A673 (cell line): ENCODE measurements at regions of chr13 and their contacts with region 1.

Region 1: DNA sequence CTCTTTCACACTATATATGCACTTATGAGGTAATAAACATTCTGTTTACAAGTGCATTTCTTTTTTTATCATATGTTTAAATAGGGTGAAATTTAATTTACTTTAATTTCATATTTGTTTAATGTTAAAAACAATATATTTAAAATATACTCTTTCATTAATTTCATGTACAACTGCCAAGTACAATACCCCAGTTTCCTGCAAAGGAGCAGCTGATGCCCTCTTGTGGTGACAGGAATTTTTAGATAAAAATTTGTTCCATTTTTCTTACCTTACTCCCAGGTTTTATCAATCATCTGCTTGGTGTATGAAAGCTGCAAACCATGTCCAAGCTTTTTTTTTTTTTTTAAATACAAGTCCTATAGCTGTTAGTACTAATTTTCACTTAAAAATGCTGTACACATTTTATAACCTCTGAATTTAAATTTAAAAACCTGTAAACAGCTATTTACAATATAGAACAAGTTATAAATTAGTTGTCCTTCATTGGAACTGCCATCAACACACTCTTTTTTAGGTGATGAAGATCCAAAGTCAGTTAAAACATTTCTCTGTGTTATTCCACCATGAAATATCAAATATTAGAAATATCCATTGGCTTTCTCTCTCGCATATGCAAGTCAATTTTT is 4.9 kb downstream of the PCDH20 start:
- DNase-seq: peak; percentile 29
- H3K4me3 ChIP-seq: no peak overlapping the region
- H3K27ac ChIP-seq: no peak overlapping the region
- H3K4me1 ChIP-seq: peaks cover 12% of the 10 kb centered on the region
- H3K27me3 ChIP-seq: no peaks in the 10 kb centered on the region
- CTCF ChIP-seq: peak; percentile 74

Region 2: GRCh38 chr13:60479273-60479672 is 931.5 kb before region 1 on chr13:
- CTCF ChIA-PET with region 1: no interaction called
- POLR2A ChIA-PET with region 1: no interaction called
- intact Hi-C with region 1: loop called (anchors 10 kb)
- DNase-seq: no peak
- H3K4me3 ChIP-seq: no peak overlapping the region
- H3K27ac ChIP-seq: no peak overlapping the region
- H3K4me1 ChIP-seq: no peaks in the 10 kb centered on the region
- H3K27me3 ChIP-seq: no peaks in the 10 kb centered on the region
- CTCF ChIP-seq: no peak

Region 3: GRCh38 chr13:60627071-60627686 is 783.6 kb before region 1 on chr13:
- CTCF ChIA-PET with region 1: no interaction called
- POLR2A ChIA-PET with region 1: no interaction called
- intact Hi-C with region 1: loop called (anchors 10 kb)
- DNase-seq: peak; percentile 79
- H3K4me3 ChIP-seq: no peak overlapping the region
- H3K27ac ChIP-seq: no peak overlapping the region
- H3K4me1 ChIP-seq: no peaks in the 10 kb centered on the region
- H3K27me3 ChIP-seq: peaks cover 8% of the 10 kb centered on the region
- CTCF ChIP-seq: peak; percentile 88

Region 4: GRCh38 chr13:60654415-60654814 is 756.4 kb before region 1 on chr13:
- CTCF ChIA-PET with region 1: no interaction called
- POLR2A ChIA-PET with region 1: no interaction called
- intact Hi-C with region 1: loop called (anchors 5 kb)
- DNase-seq: peak; percentile 67
- H3K4me3 ChIP-seq: no peak overlapping the region
- H3K27ac ChIP-seq: no peak overlapping the region
- H3K4me1 ChIP-seq: no peaks in the 10 kb centered on the region
- H3K27me3 ChIP-seq: no peaks in the 10 kb centered on the region
- CTCF ChIP-seq: peak; percentile 88

Region 5: DNA sequence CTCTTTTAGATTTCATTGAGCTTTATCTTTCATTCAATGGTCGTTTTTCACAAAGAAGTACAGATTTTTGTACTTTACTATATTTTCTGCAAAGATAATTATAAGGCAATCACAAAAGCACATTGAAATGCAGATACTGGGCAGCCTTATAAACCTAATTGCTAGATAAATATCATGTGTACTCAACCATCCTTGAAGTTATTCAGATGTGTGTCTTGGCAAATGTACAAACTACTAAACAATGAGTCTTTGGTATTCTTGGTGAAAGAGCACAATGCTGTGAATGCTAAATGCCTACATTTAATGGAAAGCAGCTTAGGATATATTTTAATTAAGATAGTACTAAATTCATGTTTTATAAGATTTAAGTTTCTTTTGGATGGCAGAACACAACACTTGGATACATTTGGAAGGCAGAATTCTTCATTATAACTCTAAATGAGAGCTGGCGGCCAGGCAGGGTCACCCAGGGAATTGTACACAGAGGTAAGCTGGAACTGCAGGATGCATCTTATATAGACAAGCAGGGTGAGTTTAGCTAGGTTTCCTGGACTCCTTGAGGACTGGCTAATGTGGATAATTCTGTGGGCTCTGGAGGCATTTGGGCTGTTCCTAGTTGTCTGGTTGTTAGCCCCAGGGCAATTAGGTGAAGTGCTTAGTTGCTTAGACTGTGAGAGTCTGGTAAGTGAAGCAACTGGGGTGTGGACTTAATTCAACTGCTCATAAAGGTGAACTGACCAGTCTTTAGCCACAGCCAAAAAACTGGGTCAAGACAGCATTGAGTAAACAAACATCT is 281.7 kb before region 1 on chr13:
- CTCF ChIA-PET with region 1: no interaction called
- POLR2A ChIA-PET with region 1: no interaction called
- intact Hi-C with region 1: loop called (anchors 5 kb)
- DNase-seq: peak; percentile 33
- H3K4me3 ChIP-seq: no peak overlapping the region
- H3K27ac ChIP-seq: no peak overlapping the region
- H3K4me1 ChIP-seq: peaks cover 7% of the 10 kb centered on the region
- H3K27me3 ChIP-seq: no peaks in the 10 kb centered on the region
- CTCF ChIP-seq: no peak

Region 6: DNA sequence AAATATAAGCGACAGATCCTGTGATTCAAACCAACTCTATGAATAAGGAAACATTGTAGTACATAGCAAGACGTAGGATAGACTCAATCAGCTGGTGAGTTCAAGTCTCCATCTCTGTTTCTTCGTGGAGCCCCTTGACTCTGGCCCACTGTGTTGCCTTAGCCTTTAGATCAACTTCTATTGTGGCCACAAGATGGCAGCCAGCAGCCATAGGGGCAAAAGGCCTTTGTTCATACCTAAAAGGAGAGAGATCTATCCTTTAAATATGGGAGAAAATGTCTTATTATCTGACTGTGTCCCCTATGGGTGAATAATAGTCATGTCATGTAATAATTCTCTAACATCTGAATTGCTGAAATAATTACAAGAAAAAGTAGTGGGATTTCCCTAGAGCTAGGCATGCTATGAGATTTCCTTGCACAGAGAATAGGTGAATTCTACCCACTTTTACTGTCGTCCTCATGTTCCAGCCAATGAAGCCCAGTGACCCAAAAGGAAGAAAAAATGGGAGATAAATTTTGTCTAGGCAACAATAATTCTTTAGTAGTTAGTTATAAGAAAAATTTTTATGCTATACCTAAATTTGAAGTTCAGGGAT is 124.5 kb before region 1 on chr13:
- CTCF ChIA-PET with region 1: no interaction called
- POLR2A ChIA-PET with region 1: no interaction called
- intact Hi-C with region 1: loop called (anchors 5 kb)
- DNase-seq: peak; percentile 61
- H3K4me3 ChIP-seq: no peak overlapping the region
- H3K27ac ChIP-seq: no peak overlapping the region
- H3K4me1 ChIP-seq: no peaks in the 10 kb centered on the region
- H3K27me3 ChIP-seq: no peaks in the 10 kb centered on the region
- CTCF ChIP-seq: peak; percentile 59

Region 7: GRCh38 chr13:61765181-61765742 is 354.5 kb after region 1 on chr13:
- CTCF ChIA-PET with region 1: no interaction called
- POLR2A ChIA-PET with region 1: no interaction called
- intact Hi-C with region 1: no loop called
- DNase-seq: no peak
- H3K4me3 ChIP-seq: no peak overlapping the region
- H3K27ac ChIP-seq: no peak overlapping the region
- H3K4me1 ChIP-seq: no peaks in the 10 kb centered on the region
- H3K27me3 ChIP-seq: no peaks in the 10 kb centered on the region
- CTCF ChIP-seq: no peak

Region 8: DNA sequence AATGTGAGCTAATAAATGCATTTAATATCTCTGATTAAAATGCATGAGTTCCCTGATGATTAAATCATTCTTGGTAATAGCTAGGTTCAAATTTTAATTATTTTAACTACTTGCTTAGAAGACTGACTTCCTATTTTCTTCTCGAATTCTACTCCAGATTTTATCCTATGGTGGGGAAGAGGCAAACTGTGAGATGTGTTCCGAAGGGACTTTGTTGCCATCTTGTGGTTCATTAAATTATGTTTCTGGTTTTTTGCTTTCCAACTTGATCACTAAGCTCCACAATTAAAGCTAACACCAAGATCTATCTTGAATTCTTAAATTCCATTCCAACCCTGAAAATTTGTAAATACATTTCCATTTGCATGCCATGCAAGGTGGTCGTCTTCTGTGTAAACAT is 543.3 kb after region 1 on chr13:
- CTCF ChIA-PET with region 1: interaction called, 4 read pairs
- POLR2A ChIA-PET with region 1: no interaction called
- intact Hi-C with region 1: loop called (anchors 5 kb)
- DNase-seq: peak; percentile 67
- H3K4me3 ChIP-seq: no peak overlapping the region
- H3K27ac ChIP-seq: no peak overlapping the region
- H3K4me1 ChIP-seq: no peaks in the 10 kb centered on the region
- H3K27me3 ChIP-seq: no peaks in the 10 kb centered on the region
- CTCF ChIP-seq: peak; percentile 57